ENCODE measurements at regions of chr13 and their contacts with region 1.

Region 1: GRCh38 chr13:112873851-112874750 is 94.9 kb upstream of the MCF2L start:
- DNase-seq: peak; percentile 48
- ATAC-seq: peak; percentile 89
- H3K4me3 ChIP-seq: no peak overlapping the region
- H3K27ac ChIP-seq: peak overlapping the region; percentile 91
- H3K4me1 ChIP-seq: peaks cover 28 to 34% of the 10 kb centered on the region in 2 experiments
- H3K27me3 ChIP-seq: no peaks in the 10 kb centered on the region
- CTCF ChIP-seq: peak in 2 of 3 experiments; percentile 87 to 93; a peak in 4 of 6 replicates
- POLR2A ChIP-seq: no peak
- RAD21 ChIP-seq: no peak

Region 2: DNA sequence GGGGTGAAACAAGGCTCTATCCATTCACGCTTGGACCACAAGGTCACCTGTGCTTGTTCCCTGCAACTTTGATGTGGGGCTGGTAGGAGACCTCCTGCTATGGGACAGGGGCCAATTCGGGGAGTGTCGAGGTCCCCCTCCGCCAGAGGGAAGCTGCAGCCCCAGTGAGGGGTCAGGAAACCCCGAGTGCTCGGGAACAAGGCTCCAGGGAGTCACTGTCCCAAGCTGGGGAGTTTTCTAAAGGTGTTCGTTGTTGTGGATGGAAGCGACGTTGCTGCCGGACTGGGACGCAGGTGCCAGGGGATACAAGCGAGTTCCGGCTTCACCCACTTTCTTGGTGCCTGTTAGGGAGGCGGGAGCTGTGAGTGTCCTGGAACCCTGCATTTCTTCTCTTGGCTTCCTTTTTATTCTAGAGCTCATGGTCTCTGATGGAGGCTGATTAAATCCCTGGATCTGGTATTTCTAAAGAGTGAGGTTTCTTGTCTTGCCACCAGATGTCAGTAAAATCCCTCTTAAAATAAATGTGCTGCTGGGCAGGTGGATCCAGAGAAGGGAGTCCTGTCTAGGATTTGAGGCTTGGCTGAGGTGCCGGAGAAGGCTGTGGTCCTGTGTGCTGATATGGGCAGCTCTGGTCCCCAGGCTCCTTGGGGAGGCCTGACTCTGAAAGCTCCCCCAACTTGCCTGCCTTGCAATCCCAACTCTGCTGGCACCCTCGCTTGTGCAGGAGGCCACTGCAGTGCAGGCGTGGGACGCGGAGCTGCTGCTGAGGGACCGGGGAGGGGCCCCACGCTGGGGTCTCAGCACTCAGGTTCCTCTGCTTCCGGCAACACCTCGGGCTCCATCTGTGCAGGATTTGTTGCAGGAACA is 1399.7 kb before region 1 on chr13:
- CTCF ChIA-PET with region 1: no interaction called
- POLR2A ChIA-PET with region 1: no interaction called
- RAD21 ChIA-PET with region 1: no interaction called
- intact Hi-C with region 1: loop called (anchors 1 kb)
- DNase-seq: peak; percentile 21
- ATAC-seq: peak; percentile 85
- H3K4me3 ChIP-seq: no peak overlapping the region
- H3K27ac ChIP-seq: no peak overlapping the region
- H3K4me1 ChIP-seq: no peaks in the 10 kb centered on the region
- H3K27me3 ChIP-seq: no peaks in the 10 kb centered on the region
- CTCF ChIP-seq: peak; percentile 55 to 66 (median 58); a peak in 5 of 6 replicates
- POLR2A ChIP-seq: no peak
- RAD21 ChIP-seq: peak; percentile 76

Region 3: DNA sequence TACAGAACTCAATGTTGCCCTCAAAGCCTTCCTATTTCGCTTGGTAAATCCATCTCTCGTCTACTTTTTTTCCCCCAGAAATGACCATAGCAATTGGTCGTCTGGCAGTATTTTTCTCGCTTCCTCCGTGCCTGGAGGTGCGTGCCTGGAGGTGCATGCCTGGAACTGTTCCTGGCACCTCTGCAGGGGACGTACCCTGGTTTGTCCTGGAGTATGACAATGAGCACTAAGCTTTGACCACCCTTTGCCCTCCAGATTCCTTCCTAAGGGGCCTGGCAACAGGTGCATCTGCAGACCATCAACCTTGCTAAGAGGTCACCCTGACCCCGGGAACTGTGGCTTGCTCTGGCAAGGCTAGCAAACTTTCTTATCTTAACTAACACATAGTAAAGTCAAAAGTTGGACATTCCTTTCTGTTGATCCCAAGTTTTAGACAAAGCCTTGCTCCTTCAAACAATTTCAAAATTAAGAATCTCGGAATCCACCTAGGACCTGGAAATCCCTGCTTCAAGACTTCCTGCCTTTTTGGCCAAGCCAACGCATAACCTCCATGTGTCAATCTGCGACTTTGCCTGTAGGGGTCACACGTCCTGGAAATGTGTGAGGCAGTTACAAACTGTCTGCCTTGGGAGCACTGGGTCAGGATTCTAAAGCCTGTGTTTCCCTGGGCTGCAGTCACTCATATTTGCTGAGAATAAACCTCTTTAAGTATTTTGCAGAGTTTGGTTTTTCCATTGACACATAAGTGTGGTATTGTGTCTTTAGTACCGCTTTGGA is 257.3 kb before region 1 on chr13:
- CTCF ChIA-PET with region 1: interaction called, 3 read pairs
- POLR2A ChIA-PET with region 1: no interaction called
- RAD21 ChIA-PET with region 1: no interaction called
- intact Hi-C with region 1: loop called (anchors 1 kb)
- DNase-seq: peak; percentile 55
- ATAC-seq: peak; percentile 89
- H3K4me3 ChIP-seq: no peak overlapping the region
- H3K27ac ChIP-seq: no peak overlapping the region
- H3K4me1 ChIP-seq: 0 out of 4 replicates have a peak, but pooled peaks cover 0 to 7% of the 10 kb centered on the region in 2 experiments
- H3K27me3 ChIP-seq: no peaks in the 10 kb centered on the region
- CTCF ChIP-seq: peak; percentile 49 to 77 (median 75); a peak in 5 of 6 replicates
- POLR2A ChIP-seq: no peak
- RAD21 ChIP-seq: peak; percentile 56

Region 4: GRCh38 chr13:112638157-112638750 is 235.8 kb before region 1 on chr13:
- CTCF ChIA-PET with region 1: interaction called, 16 read pairs
- POLR2A ChIA-PET with region 1: no interaction called
- RAD21 ChIA-PET with region 1: interaction called in 1 of 2 experiments, 7 read pairs
- intact Hi-C with region 1: loop called (anchors 1 kb)
- DNase-seq: no peak
- ATAC-seq: no peak
- H3K4me3 ChIP-seq: no peak overlapping the region
- H3K27ac ChIP-seq: no peak overlapping the region
- H3K4me1 ChIP-seq: peaks cover 0 to 9% of the 10 kb centered on the region in 2 experiments; a peak in 2 of 4 replicates
- H3K27me3 ChIP-seq: peaks cover 24% of the 10 kb centered on the region
- CTCF ChIP-seq: no peak
- POLR2A ChIP-seq: no peak
- RAD21 ChIP-seq: no peak

Region 5: GRCh38 chr13:112733661-112734379 is 140.3 kb before region 1 on chr13:
- CTCF ChIA-PET with region 1: no interaction called
- POLR2A ChIA-PET with region 1: no interaction called
- RAD21 ChIA-PET with region 1: no interaction called
- intact Hi-C with region 1: loop called (anchors 5 kb)
- DNase-seq: no peak
- ATAC-seq: no peak
- H3K4me3 ChIP-seq: no peak overlapping the region
- H3K27ac ChIP-seq: no peak overlapping the region
- H3K4me1 ChIP-seq: peaks cover 29 to 31% of the 10 kb centered on the region in 2 experiments
- H3K27me3 ChIP-seq: no peaks in the 10 kb centered on the region
- CTCF ChIP-seq: no peak
- POLR2A ChIP-seq: no peak
- RAD21 ChIP-seq: no peak

Region 6: GRCh38 chr13:112885782-112886268 is 11.7 kb after region 1 on chr13:
- CTCF ChIA-PET with region 1: interaction called, 11 read pairs
- POLR2A ChIA-PET with region 1: no interaction called
- RAD21 ChIA-PET with region 1: no interaction called
- intact Hi-C with region 1: no loop called
- DNase-seq: peak; percentile 37
- ATAC-seq: peak; percentile 95
- H3K4me3 ChIP-seq: peak overlapping the region; percentile 2 to 34; a peak in 3 of 4 replicates
- H3K27ac ChIP-seq: no peak overlapping the region
- H3K4me1 ChIP-seq: peaks cover 0 to 11% of the 10 kb centered on the region in 2 experiments; a peak in 3 of 4 replicates
- H3K27me3 ChIP-seq: no peaks in the 10 kb centered on the region
- CTCF ChIP-seq: no peak
- POLR2A ChIP-seq: no peak
- RAD21 ChIP-seq: no peak